Heart right ventricle (tissue), 16 donors: ENCODE measurements at regions of chr6 and their contacts with region 1.

Region 1: GRCh38 chr6:96897383-96898240 is at the start of gene NDUFAF4:
- DNase-seq: peak; percentile 96 to 97
- ATAC-seq: peak; percentile 97 to 100 (median 99)
- H3K4me3 ChIP-seq: peak within 1 kb of the TSS; percentile 75 to 97 (median 88)
- H3K27ac ChIP-seq: peak within 1 kb of the TSS; percentile 89 to 98 (median 94)
- H3K4me1 ChIP-seq: peaks cover 0 to 63% (median 40%) of the 10 kb centered on the region in 9 donors
- H3K27me3 ChIP-seq: no peaks in the 10 kb centered on the region
- CTCF ChIP-seq: peak; percentile 93 to 99 (median 96)
- total RNA-seq, gene NDUFAF4: 70.7 to 122 (median 101) TPM

Region 2: DNA sequence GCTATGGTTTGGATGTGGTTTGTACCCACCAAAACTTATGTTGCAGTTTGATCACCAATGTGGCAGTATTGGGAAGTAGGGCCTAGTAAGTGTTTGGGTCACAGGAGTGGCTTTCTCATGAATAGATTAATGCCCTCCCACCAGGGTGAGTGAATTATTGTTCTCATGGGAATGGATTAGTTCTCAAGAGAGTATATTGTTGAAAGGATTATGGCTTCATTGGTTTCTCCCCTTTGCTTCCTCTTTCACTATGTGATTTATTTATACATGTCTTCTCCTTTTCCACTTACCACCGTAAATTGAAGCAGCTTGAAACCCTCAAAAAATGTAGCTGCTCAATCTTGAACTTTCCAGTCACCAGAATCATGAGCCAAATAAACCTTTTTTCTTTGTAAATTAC is 365.2 kb before region 1 on chr6:
- intact Hi-C with region 1: loop called in 5 of 10 experiments (anchors 10 kb)
- DNase-seq: no peak
- ATAC-seq: no peak
- H3K4me3 ChIP-seq: no peak overlapping the region
- H3K27ac ChIP-seq: no peak overlapping the region
- H3K4me1 ChIP-seq: no peaks in the 10 kb centered on the region
- H3K27me3 ChIP-seq: no peaks in the 10 kb centered on the region
- CTCF ChIP-seq: no peak

Region 3: DNA sequence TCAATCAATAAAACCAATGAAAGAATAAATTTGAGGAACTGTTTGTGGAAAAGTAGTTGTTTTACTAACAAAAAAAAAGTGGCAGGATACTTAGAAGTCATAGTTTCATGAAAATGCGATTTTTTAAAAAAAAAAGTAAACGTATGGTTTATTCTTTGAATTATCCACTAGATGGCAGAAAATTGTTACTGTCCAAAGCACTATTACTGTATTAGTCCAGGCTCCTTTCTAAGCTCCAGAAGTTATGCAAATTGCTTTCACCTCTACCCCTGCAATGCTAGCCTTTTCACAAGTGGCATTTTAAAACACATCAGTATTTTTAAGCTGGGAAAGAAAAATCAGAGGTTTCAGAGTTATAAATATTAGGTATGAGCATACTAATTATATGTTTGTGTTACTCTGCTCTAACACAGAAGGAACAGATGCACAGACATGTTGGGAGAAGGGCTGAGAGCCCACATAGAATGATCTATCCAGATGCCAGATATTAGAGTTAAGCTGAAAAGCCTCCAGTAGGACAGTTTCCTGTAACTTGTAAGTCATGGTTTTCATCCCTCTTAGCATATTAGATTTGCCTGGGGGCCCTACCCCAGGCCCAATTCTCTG is 270.8 kb before region 1 on chr6:
- intact Hi-C with region 1: loop called in 6 of 10 experiments (anchors 5 to 10 kb)
- DNase-seq: no peak
- ATAC-seq: peak in 4 of 8 donors; percentile 29 to 74 (median 56)
- H3K4me3 ChIP-seq: no peak overlapping the region
- H3K27ac ChIP-seq: no peak overlapping the region
- H3K4me1 ChIP-seq: peaks cover 0 to 6% (median 0%) of the 10 kb centered on the region in 9 donors
- H3K27me3 ChIP-seq: peaks cover 0 to 12% (median 0%) of the 10 kb centered on the region in 7 donors
- CTCF ChIP-seq: peak in 8 of 9 donors; percentile 21 to 68 (median 51)

Region 4: GRCh38 chr6:96923871-96924493 is 26.4 kb after region 1 on chr6:
- intact Hi-C with region 1: loop called in 1 of 10 experiments (anchors 2 kb)
- DNase-seq: no peak
- ATAC-seq: peak; percentile 17 to 86 (median 75)
- H3K4me3 ChIP-seq: peak overlapping the region; percentile 49 to 69 (median 62)
- H3K27ac ChIP-seq: peak overlapping the region in 9 of 10 donors; percentile 34 to 79 (median 70)
- H3K4me1 ChIP-seq: peaks cover 0 to 16% (median 7%) of the 10 kb centered on the region in 9 donors
- H3K27me3 ChIP-seq: peaks cover 0 to 13% (median 0%) of the 10 kb centered on the region in 7 donors
- CTCF ChIP-seq: no peak

Region 5: DNA sequence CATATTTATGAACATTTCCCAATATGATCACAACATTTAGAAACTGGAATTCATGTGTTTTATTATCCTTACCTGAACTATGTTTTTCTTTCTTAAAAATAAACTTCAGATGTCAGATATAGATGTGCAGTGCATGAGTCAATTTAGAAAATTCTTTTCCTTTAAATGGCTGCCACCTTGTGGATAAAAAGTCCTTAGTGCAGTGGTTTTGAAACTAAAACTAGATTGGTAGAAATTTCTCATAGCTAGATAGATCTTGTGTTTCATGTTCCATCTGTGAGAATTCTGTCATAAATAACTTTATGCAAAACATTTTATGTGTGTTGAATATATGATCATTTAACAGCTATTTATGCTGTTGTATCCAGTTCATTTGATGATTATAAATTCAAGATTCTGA is 161.9 kb after region 1 on chr6:
- intact Hi-C with region 1: loop called in 7 of 10 experiments (anchors 2 to 5 kb)
- DNase-seq: no peak
- ATAC-seq: peak in 1 of 8 donors; percentile 33
- H3K4me3 ChIP-seq: no peak overlapping the region
- H3K27ac ChIP-seq: no peak overlapping the region
- H3K4me1 ChIP-seq: no peaks in the 10 kb centered on the region
- H3K27me3 ChIP-seq: peaks cover 0 to 3% (median 0%) of the 10 kb centered on the region in 7 donors
- CTCF ChIP-seq: peak; percentile 20 to 70 (median 61)

Region 6: GRCh38 chr6:97394160-97394748 is 496.6 kb after region 1 on chr6:
- intact Hi-C with region 1: loop called in 1 of 10 experiments (anchors 5 kb)
- DNase-seq: peak in 1 of 2 donors; percentile 32
- ATAC-seq: peak in 1 of 8 donors; percentile 58
- H3K4me3 ChIP-seq: no peak overlapping the region
- H3K27ac ChIP-seq: no peak overlapping the region
- H3K4me1 ChIP-seq: no peaks in the 10 kb centered on the region
- H3K27me3 ChIP-seq: no peaks in the 10 kb centered on the region
- CTCF ChIP-seq: peak; percentile 71 to 96 (median 90)